OCI-LY7 (cell line): ENCODE measurements at regions of chr10 and their contacts with region 1.

Region 1: GRCh38 chr10:11684717-11685645 is 57.2 kb upstream of the ECHDC3 start:
- DNase-seq: peak; percentile 96
- H3K4me3 ChIP-seq: peak overlapping the region; percentile 66
- H3K27ac ChIP-seq: peak overlapping the region; percentile 100
- H3K4me1 ChIP-seq: peaks cover 89% of the 10 kb centered on the region
- CTCF ChIP-seq: no peak

Region 2: GRCh38 chr10:10996966-10997620 is 687.9 kb before region 1 on chr10:
- CTCF ChIA-PET with region 1: no interaction called
- POLR2A ChIA-PET with region 1: no interaction called
- intact Hi-C with region 1: no loop called
- DNase-seq: no peak
- H3K4me3 ChIP-seq: no peak overlapping the region
- H3K27ac ChIP-seq: no peak overlapping the region
- H3K4me1 ChIP-seq: no peaks in the 10 kb centered on the region
- CTCF ChIP-seq: no peak

Region 3: GRCh38 chr10:11515596-11516430 is 169.2 kb before region 1 on chr10:
- CTCF ChIA-PET with region 1: interaction called, 3 read pairs
- POLR2A ChIA-PET with region 1: interaction called, 3 read pairs
- intact Hi-C with region 1: loop called (anchors 1 kb)
- DNase-seq: peak; percentile 84
- H3K4me3 ChIP-seq: peak overlapping the region; percentile 35
- H3K27ac ChIP-seq: peak overlapping the region; percentile 65
- H3K4me1 ChIP-seq: peaks cover 30% of the 10 kb centered on the region
- CTCF ChIP-seq: peak; percentile 100

Region 4: DNA sequence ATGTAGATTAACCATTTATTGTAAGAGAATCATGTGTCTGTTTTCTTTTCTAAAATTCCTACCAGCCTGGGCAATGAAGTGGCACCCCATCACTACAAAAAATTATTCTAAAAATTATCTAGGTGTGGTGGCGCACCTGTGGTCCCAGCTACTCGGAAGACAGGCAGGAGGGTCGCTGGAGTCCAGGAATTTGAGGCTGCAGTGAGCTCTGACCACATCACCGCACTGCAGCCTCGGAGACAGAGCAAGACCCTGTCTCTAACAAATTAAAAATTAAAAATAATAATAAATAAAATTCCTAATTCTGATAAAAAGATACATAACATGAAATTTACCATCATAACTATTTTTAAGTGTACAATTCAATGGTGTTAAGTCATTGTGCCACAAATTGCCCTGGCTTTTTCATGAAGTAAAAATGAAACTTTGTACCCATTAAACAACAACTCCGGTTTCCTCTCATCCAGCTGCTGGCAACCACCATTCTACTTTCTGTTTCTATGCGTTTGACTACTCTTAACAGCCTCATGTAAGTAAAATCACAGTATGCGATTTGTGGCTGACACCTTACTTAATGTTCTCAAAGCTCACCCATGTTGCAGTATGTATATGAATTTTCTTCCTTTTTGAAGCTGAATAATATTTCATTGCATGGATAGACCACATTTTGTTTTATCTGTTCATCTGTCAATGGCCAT is 52.9 kb before region 1 on chr10:
- CTCF ChIA-PET with region 1: no interaction called
- POLR2A ChIA-PET with region 1: interaction called, 10 read pairs
- intact Hi-C with region 1: no loop called
- DNase-seq: peak; percentile 81
- H3K4me3 ChIP-seq: peak overlapping the region; percentile 49
- H3K27ac ChIP-seq: peak overlapping the region; percentile 75
- H3K4me1 ChIP-seq: peaks cover 43% of the 10 kb centered on the region
- CTCF ChIP-seq: no peak; the same call in 1 of the 2 replicates

Region 5: DNA sequence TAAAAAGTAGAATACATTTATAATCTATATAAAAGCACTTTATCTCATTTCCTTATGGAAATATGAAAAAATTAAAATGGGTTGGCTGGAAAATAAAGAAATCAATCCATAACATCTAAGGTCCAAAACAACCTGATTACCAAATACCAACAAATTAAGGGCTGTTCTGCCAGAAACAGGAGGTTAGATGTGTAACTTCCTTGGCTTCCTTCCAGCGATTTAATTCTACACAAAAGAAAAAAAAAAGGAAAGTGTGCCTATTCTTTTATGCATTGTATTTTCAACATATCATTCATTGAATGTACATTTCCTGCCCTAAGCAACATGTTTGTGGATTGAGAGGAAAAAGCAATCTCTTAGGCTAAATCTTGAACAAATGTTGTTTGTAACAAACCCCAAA is 37.3 kb before region 1 on chr10:
- CTCF ChIA-PET with region 1: no interaction called
- POLR2A ChIA-PET with region 1: interaction called, 10 read pairs
- intact Hi-C with region 1: no loop called
- DNase-seq: no peak
- H3K4me3 ChIP-seq: no peak overlapping the region
- H3K27ac ChIP-seq: no peak overlapping the region
- H3K4me1 ChIP-seq: peaks cover 25% of the 10 kb centered on the region
- CTCF ChIP-seq: no peak

Region 6: DNA sequence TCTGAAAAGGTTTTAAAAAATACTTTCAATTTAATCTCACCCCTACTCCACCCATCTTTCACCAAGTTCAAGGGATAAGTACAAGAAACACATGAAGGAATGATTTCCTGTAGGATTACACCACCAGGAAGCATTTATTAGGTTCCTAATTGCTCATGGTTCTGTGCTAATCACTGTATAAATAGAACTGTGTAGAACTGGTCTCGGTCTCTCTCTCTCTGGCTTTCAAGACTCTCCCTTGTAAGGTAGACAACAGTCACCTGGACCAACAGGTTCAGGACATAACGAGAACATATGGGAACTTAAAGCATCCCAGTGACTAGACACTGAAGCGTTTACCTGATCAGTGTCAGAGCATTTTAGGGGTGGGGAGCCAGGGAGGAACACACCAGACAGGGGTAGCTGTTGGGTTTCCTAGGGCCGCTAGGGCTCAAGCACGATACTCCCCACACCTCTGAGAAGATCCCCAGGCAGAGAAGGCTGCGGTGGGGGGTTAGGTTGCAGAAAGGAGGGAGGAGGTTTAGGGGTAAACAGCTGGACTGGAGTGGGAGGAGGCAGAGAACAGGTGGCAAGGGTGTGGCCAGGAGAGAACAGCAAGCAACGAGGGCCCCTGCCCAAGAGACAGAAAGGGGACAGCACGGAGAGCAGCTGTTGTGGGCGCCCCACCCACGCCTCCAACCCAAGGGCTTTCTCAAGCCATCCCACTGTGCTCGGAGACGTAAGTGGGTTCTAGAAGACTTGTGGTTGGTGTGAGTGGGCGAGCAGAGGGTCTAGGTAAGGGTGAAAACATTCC is 21.0 kb before region 1 on chr10:
- CTCF ChIA-PET with region 1: no interaction called
- POLR2A ChIA-PET with region 1: interaction called, 109 read pairs
- intact Hi-C with region 1: loop called (anchors 2 kb)
- DNase-seq: peak; percentile 72
- H3K4me3 ChIP-seq: peak overlapping the region; percentile 53
- H3K27ac ChIP-seq: peak overlapping the region; percentile 96
- H3K4me1 ChIP-seq: peaks cover 83% of the 10 kb centered on the region
- CTCF ChIP-seq: no peak

Region 7: DNA sequence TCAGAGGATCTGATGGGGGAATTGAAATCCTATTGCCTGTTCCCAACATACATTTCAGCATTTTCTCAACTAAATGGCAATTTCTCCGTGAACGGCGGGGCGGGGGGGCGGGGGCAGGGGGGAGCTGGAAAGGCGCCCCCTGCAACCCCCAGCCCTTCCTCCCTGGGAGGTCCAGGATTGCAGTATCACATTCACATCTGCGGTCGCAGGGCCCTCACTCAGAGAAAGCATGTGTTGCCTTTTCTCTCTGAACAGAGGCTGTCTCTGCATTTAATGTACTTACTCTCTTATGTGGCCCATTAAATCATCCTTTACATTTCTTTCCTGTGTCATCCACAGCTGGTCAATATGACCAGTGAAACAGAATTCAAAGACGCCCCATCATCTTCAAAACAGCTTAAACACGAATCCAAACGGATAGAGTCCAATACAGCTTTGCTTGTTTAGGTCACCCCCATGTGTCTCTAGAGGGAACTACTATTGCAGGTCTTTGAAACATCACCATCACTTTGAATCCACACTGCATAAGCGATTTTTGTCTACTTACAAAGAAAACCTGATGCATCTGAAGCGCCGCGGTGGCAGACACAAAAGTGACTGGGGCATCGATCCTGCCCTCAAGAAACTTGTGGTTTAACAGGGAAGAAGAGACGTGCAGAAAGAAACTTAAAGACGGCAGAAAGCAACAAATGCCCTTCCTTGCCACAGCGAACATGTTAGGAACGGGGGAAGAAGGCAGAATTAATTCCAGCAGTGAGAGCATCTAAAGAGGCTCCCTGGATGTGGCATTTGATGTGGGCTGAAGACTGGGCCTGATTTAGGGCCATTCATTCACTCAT is 40.2 kb after region 1 on chr10:
- CTCF ChIA-PET with region 1: no interaction called
- POLR2A ChIA-PET with region 1: interaction called, 4 read pairs
- intact Hi-C with region 1: loop called (anchors 1 kb)
- DNase-seq: peak; percentile 90
- H3K4me3 ChIP-seq: no peak overlapping the region
- H3K27ac ChIP-seq: peak overlapping the region; percentile 6
- H3K4me1 ChIP-seq: peaks cover 46% of the 10 kb centered on the region
- CTCF ChIP-seq: peak; percentile 98

Region 8: DNA sequence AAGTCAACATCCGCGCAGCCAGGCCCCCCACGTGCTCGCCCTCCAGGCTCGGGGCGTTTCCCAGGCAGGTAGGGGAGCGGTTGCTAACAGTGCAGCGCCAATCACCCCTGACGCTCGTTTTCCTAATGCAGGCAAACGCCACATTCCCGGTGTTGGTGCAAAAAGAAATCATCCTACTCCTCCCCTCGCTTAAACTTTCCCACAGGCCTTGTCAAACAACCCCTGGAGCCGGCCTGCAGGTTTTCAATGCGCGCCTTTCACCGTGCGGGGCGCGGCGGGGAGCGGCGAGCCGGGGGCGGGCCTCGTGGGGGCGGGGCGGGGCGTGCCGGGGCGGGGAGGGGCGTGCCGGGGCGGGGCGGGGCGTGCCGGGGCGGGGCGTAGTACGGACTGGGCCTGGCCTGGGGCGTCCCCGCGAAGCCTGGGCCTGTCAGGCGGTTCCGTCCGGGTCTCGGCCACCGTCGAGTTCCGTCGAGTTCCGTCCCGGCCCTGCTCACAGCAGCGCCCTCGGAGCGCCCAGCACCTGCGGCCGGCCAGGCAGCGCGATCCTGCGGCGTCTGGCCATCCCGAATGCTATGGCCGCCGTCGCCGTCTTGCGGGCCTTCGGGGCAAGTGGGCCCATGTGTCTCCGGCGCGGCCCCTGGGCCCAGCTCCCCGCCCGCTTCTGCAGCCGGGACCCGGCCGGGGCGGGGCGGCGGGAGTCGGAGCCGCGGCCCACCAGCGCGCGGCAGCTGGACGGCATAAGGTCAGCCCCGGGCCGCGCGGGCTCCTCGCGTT is 57.2 kb after region 1 on chr10 and contains the start of gene ECHDC3:
- CTCF ChIA-PET with region 1: no interaction called
- POLR2A ChIA-PET with region 1: no interaction called
- intact Hi-C with region 1: no loop called
- DNase-seq: no peak
- H3K4me3 ChIP-seq: no peak within 1 kb of the TSS
- H3K27ac ChIP-seq: no peak within 1 kb of the TSS
- H3K4me1 ChIP-seq: no peaks in the 10 kb centered on the region
- CTCF ChIP-seq: no peak
- total RNA-seq, gene ECHDC3: 0.26 TPM in 1 of 2 replicates, not detected in the other

Region 9: GRCh38 chr10:12042797-12043651 is 358.0 kb after region 1 on chr10 and contains the start of gene UPF2:
- CTCF ChIA-PET with region 1: no interaction called
- POLR2A ChIA-PET with region 1: no interaction called
- intact Hi-C with region 1: loop called (anchors 10 kb)
- DNase-seq: peak; percentile 99
- H3K4me3 ChIP-seq: peak within 1 kb of the TSS; percentile 99
- H3K27ac ChIP-seq: peak within 1 kb of the TSS; percentile 79
- H3K4me1 ChIP-seq: peaks cover 25% of the 10 kb centered on the region
- CTCF ChIP-seq: no peak
- total RNA-seq, gene UPF2: 24.8 and 28.0 TPM in 2 replicates